Activated B cell treated with CpG ODN at 0.5 μM for 24 hours (primary cell): ENCODE measurements at regions of chr13 and their contacts with region 1.

Region 1: GRCh38 chr13:32427852-32428580 is at the start of gene N4BP2L1:
- DNase-seq: peak; percentile 77
- ATAC-seq: peak; percentile 73
- H3K4me3 Mint-ChIP-seq: peak within 1 kb of the TSS; percentile 95
- H3K27ac Mint-ChIP-seq: peak within 1 kb of the TSS; percentile 99
- H3K4me1 Mint-ChIP-seq: peaks cover 48% of the 10 kb centered on the region
- H3K27me3 Mint-ChIP-seq: no peaks in the 10 kb centered on the region
- CTCF ChIP-seq: no peak
- total RNA-seq, gene N4BP2L1: 23.0 and 24.3 TPM in 2 replicates

Region 2: DNA sequence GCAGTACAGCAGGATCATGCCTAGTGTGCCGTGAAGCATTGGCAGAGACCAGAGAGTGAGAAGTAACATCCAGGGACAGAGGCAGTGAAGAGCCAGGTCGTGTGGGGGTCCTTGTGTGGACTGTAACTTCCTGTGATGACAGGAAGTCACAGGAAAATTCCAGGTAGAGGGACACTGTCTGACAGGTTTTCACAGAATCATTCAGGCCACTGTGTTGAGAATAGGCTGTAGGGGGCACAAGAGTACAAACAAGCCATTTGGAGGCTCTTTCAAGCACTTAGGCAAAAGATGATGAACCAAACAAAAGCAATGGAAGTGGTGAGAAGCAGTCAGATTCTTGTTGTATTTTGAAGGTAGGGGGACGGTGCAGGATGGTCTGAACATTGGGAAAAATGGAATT is 46.5 kb before region 1 on chr13:
- CTCF ChIA-PET with region 1: no interaction called
- POLR2A ChIA-PET with region 1: no interaction called
- intact Hi-C with region 1: loop called (anchors 5 kb)
- DNase-seq: no peak
- ATAC-seq: peak; percentile 37
- H3K4me3 Mint-ChIP-seq: no peak overlapping the region
- H3K27ac Mint-ChIP-seq: no peak overlapping the region
- H3K4me1 Mint-ChIP-seq: no peaks in the 10 kb centered on the region
- H3K27me3 Mint-ChIP-seq: no peaks in the 10 kb centered on the region
- CTCF ChIP-seq: no peak

Region 3: DNA sequence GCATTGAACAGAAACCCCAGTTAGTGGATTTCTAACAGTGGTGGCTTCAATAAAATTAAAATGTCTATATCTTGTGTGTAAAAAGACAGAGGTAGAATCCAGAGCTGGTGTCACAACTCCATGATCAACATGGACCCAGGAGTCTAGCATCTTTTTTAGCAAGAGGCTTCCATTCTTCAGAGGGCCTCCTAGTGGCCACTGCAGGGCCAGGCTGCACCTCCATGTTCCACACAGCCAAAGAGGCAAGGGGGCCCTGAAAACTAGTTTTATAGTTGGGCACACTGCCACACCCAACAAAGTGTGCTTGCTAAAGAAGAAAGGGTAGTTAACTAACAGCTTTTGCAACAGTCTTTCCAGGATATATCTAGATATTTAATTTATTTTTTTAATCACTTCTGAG is 13.0 kb before region 1 on chr13:
- CTCF ChIA-PET with region 1: no interaction called
- POLR2A ChIA-PET with region 1: interaction called, 3 read pairs
- intact Hi-C with region 1: loop called (anchors 1 kb)
- DNase-seq: no peak
- ATAC-seq: peak; percentile 37
- H3K4me3 Mint-ChIP-seq: no peak overlapping the region
- H3K27ac Mint-ChIP-seq: no peak overlapping the region
- H3K4me1 Mint-ChIP-seq: peaks cover 4% of the 10 kb centered on the region
- H3K27me3 Mint-ChIP-seq: no peaks in the 10 kb centered on the region
- CTCF ChIP-seq: no peak